Panc1 (cell line): ENCODE measurements at regions of chr10 and their contacts with region 1.

Region 1: GRCh38 chr10:17443707-17444387 is 10.5 kb downstream of the ST8SIA6 start:
- DNase-seq: no peak
- ATAC-seq: peak; percentile 47; the same call in 1 of the 2 replicates
- H3K4me3 ChIP-seq: peak overlapping the region in 1 of 2 experiments; percentile 12; a peak in 1 of 4 replicates
- H3K27ac ChIP-seq: peak overlapping the region; percentile 64; the same call in 1 of the 2 replicates
- H3K4me1 ChIP-seq: peaks cover 6% of the 10 kb centered on the region; the same call in 1 of the 2 replicates
- H3K27me3 ChIP-seq: no peaks in the 10 kb centered on the region
- CTCF ChIP-seq: no peak

Region 2: DNA sequence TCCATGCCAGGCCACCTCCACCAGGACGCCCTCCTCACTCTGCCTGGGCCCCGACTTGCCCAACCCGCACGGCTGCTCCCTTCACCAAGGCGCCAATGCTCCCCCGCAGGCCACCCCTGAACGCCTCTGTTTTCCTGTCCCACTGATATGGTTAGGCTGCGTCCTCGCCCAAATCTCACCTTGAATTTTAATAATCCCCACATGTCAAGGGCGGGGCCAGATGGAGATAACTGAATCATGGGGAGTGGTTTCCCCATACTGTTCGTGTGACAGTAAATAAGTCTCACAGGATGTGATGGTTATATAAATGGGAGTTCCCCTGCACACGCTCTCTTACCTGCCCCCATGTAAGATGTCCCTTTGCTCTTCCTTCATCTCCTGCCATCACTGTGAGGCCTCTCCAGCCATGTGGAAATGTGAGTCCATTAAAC is 656.5 kb before region 1 on chr10:
- CTCF ChIA-PET with region 1: no interaction called
- POLR2A ChIA-PET with region 1: no interaction called
- in situ Hi-C with region 1: no loop called
- intact Hi-C with region 1: no loop called
- DNase-seq: no peak
- ATAC-seq: no peak
- H3K4me3 ChIP-seq: no peak overlapping the region
- H3K27ac ChIP-seq: no peak overlapping the region
- H3K4me1 ChIP-seq: no peaks in the 10 kb centered on the region
- H3K27me3 ChIP-seq: no peaks in the 10 kb centered on the region
- CTCF ChIP-seq: no peak

Region 3: GRCh38 chr10:17368708-17369272 is 75.1 kb before region 1 on chr10:
- CTCF ChIA-PET with region 1: no interaction called
- POLR2A ChIA-PET with region 1: no interaction called
- in situ Hi-C with region 1: no loop called
- intact Hi-C with region 1: no loop called
- DNase-seq: no peak
- ATAC-seq: no peak
- H3K4me3 ChIP-seq: no peak overlapping the region
- H3K27ac ChIP-seq: no peak overlapping the region
- H3K4me1 ChIP-seq: 0 out of 2 replicates have a peak, but pooled peaks cover 3% of the 10 kb centered on the region
- H3K27me3 ChIP-seq: no peaks in the 10 kb centered on the region
- CTCF ChIP-seq: no peak

Region 4: DNA sequence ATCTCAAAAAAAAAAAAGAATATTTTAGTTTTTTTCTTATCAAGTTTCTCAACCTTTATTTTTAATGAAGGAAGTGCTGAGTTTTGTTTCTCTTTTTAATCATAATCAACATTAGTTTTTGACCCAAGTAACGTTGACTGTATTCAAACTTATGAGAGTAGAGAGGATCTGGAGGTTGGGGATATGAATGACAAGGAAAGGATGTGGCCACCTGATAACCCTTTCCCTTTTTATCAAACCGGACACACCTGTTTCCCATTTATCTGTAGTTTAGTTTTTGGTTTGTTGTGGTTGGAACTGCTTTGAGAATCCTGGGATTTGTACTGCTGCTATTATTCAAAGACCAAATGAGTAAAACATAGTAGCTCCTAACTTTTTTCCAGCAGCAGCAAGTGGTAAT is 134.8 kb after region 1 on chr10:
- CTCF ChIA-PET with region 1: no interaction called
- POLR2A ChIA-PET with region 1: no interaction called
- in situ Hi-C with region 1: no loop called
- intact Hi-C with region 1: no loop called
- DNase-seq: no peak
- ATAC-seq: no peak
- H3K4me3 ChIP-seq: no peak overlapping the region
- H3K27ac ChIP-seq: no peak overlapping the region
- H3K4me1 ChIP-seq: no peaks in the 10 kb centered on the region
- H3K27me3 ChIP-seq: no peaks in the 10 kb centered on the region
- CTCF ChIP-seq: no peak

Region 5: GRCh38 chr10:17599089-17599488 is 155.2 kb after region 1 on chr10:
- CTCF ChIA-PET with region 1: no interaction called
- POLR2A ChIA-PET with region 1: no interaction called
- in situ Hi-C with region 1: no loop called
- intact Hi-C with region 1: loop called (anchors 10 kb)
- DNase-seq: no peak
- ATAC-seq: peak; percentile 62; the same call in 1 of the 2 replicates
- H3K4me3 ChIP-seq: no peak overlapping the region
- H3K27ac ChIP-seq: no peak overlapping the region
- H3K4me1 ChIP-seq: peaks cover 5% of the 10 kb centered on the region; the same call in 1 of the 2 replicates
- H3K27me3 ChIP-seq: no peaks in the 10 kb centered on the region
- CTCF ChIP-seq: peak; percentile 53